ENCODE measurements at regions of chr17 and their contacts with region 1.

Region 1: GRCh38 chr17:44899069-44899782 is at the start of gene EFTUD2:
- DNase-seq: peak; percentile 67 to 96
- H3K4me3 ChIP-seq: peak within 1 kb of the TSS; percentile 85 to 100 (median 96)
- H3K27ac ChIP-seq: peak within 1 kb of the TSS; percentile 100
- H3K4me1 ChIP-seq: peaks cover 0 to 3% (median 1%) of the 10 kb centered on the region in 4 experiments; a peak in 1 of 7 replicates
- H3K27me3 ChIP-seq: no peaks in the 10 kb centered on the region; a peak in 1 of 7 replicates
- CTCF ChIP-seq: no peak
- EP300 ChIP-seq: 0 out of 3 replicates have a peak, but pooled peaks of 1 of the 2 experiments have one; percentile 43
- POLR2A ChIP-seq: peak in 1 of 2 experiments; percentile 91; a peak in 2 of 3 replicates
- RAD21 ChIP-seq: no peak
- total RNA-seq, gene EFTUD2: 174 and 195 TPM in 2 replicates

Region 2: GRCh38 chr17:44878627-44879221 is 20.5 kb before region 1 on chr17:
- CTCF ChIA-PET with region 1: interaction called, 6 read pairs
- POLR2A ChIA-PET with region 1: interaction called, 10 read pairs
- DNase-seq: no peak
- H3K4me3 ChIP-seq: no peak overlapping the region
- H3K27ac ChIP-seq: no peak overlapping the region
- H3K4me1 ChIP-seq: no peaks in the 10 kb centered on the region
- H3K27me3 ChIP-seq: no peaks in the 10 kb centered on the region
- CTCF ChIP-seq: peak in 2 of 3 experiments; percentile 39 to 61; a peak in 2 of 4 replicates
- EP300 ChIP-seq: no peak
- POLR2A ChIP-seq: no peak
- RAD21 ChIP-seq: peak; percentile 41 to 44

Region 3: GRCh38 chr17:44911133-44912001 is 12.1 kb after region 1 on chr17:
- CTCF ChIA-PET with region 1: interaction called, 36 read pairs
- POLR2A ChIA-PET with region 1: interaction called, 23 read pairs
- DNase-seq: peak; percentile 58 to 87
- H3K4me3 ChIP-seq: peak overlapping the region; percentile 21 to 62 (median 34)
- H3K27ac ChIP-seq: no peak overlapping the region
- H3K4me1 ChIP-seq: peaks cover 0 to 7% (median 5%) of the 10 kb centered on the region in 4 experiments; a peak in 6 of 7 replicates
- H3K27me3 ChIP-seq: peaks cover 0 to 21% (median 15%) of the 10 kb centered on the region in 4 experiments; a peak in 6 of 7 replicates
- CTCF ChIP-seq: peak; percentile 70 to 87 (median 82)
- EP300 ChIP-seq: no peak
- POLR2A ChIP-seq: no peak
- RAD21 ChIP-seq: peak; percentile 45 to 58